ENCODE measurements at regions of chr2 and their contacts with region 1.

Region 1: GRCh38 chr2:239267288-239267951 is 133.4 kb downstream of the HDAC4 start:
- H3K4me3 Mint-ChIP-seq: peak overlapping the region; percentile 87
- H3K27ac Mint-ChIP-seq: peak overlapping the region; percentile 99
- H3K4me1 Mint-ChIP-seq: peaks cover 87% of the 10 kb centered on the region
- H3K27me3 Mint-ChIP-seq: no peaks in the 10 kb centered on the region

Region 2: GRCh38 chr2:238784671-238785527 is 482.5 kb before region 1 on chr2:
- intact Hi-C with region 1: no loop called
- H3K4me3 Mint-ChIP-seq: no peak overlapping the region
- H3K27ac Mint-ChIP-seq: no peak overlapping the region
- H3K4me1 Mint-ChIP-seq: no peaks in the 10 kb centered on the region
- H3K27me3 Mint-ChIP-seq: peaks cover 6% of the 10 kb centered on the region

Region 3: GRCh38 chr2:239151201-239152131 is 116.0 kb before region 1 on chr2:
- intact Hi-C with region 1: no loop called
- H3K4me3 Mint-ChIP-seq: no peak overlapping the region
- H3K27ac Mint-ChIP-seq: no peak overlapping the region
- H3K4me1 Mint-ChIP-seq: no peaks in the 10 kb centered on the region
- H3K27me3 Mint-ChIP-seq: no peaks in the 10 kb centered on the region

Region 4: GRCh38 chr2:239230318-239231052 is 36.9 kb before region 1 on chr2:
- intact Hi-C with region 1: loop called (anchors 5 kb)
- H3K4me3 Mint-ChIP-seq: peak overlapping the region; percentile 20
- H3K27ac Mint-ChIP-seq: peak overlapping the region; percentile 90
- H3K4me1 Mint-ChIP-seq: peaks cover 89% of the 10 kb centered on the region
- H3K27me3 Mint-ChIP-seq: no peaks in the 10 kb centered on the region

Region 5: DNA sequence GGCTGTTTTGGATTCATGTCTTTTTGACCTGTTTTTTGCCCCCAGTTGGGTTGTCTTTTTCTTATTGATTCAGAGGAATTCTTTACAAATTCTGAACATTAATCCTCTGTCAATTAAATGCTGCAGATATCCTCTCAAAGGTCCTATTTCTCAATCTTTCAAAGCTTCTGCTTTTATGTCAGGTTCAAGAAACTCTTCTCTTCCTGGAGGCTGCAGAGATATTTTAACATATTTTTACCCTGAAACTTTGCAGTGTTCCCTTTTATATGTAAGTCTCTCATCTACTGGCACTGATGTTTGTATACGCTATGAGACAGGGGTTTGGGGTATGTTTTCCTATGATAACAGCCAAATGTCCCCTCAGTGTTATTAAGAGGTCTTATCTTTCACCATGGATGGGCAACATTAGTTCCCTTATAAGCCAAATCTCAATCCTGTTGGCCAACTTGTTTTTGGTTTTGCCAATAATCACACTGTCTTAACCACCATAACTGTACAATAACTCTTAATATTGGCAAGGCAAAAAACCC is 25.9 kb before region 1 on chr2:
- intact Hi-C with region 1: no loop called
- H3K4me3 Mint-ChIP-seq: no peak overlapping the region
- H3K27ac Mint-ChIP-seq: peak overlapping the region; percentile 69
- H3K4me1 Mint-ChIP-seq: peaks cover 95% of the 10 kb centered on the region
- H3K27me3 Mint-ChIP-seq: no peaks in the 10 kb centered on the region

Region 6: DNA sequence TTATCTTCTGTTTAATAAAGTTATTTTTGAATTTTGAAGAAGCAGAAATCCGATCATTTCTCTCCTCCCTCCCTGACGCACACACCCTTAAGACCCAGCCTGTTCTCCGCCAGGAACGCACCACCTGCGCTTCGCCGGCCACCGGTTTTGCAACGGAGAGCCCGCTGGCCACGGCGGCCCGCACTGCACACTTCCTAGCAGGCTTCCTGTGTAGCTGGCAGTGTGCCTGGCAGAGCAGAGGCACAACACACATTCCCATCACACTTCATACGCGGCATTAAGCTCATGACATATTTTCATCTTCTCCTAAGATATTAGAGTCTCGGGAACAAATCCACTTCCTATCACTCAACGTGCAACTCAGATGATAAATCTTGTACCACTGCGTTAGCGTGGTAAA is 14.6 kb before region 1 on chr2:
- intact Hi-C with region 1: loop called (anchors 2 kb)
- H3K4me3 Mint-ChIP-seq: peak overlapping the region; percentile 71
- H3K27ac Mint-ChIP-seq: peak overlapping the region; percentile 88
- H3K4me1 Mint-ChIP-seq: peaks cover 92% of the 10 kb centered on the region
- H3K27me3 Mint-ChIP-seq: no peaks in the 10 kb centered on the region

Region 7: DNA sequence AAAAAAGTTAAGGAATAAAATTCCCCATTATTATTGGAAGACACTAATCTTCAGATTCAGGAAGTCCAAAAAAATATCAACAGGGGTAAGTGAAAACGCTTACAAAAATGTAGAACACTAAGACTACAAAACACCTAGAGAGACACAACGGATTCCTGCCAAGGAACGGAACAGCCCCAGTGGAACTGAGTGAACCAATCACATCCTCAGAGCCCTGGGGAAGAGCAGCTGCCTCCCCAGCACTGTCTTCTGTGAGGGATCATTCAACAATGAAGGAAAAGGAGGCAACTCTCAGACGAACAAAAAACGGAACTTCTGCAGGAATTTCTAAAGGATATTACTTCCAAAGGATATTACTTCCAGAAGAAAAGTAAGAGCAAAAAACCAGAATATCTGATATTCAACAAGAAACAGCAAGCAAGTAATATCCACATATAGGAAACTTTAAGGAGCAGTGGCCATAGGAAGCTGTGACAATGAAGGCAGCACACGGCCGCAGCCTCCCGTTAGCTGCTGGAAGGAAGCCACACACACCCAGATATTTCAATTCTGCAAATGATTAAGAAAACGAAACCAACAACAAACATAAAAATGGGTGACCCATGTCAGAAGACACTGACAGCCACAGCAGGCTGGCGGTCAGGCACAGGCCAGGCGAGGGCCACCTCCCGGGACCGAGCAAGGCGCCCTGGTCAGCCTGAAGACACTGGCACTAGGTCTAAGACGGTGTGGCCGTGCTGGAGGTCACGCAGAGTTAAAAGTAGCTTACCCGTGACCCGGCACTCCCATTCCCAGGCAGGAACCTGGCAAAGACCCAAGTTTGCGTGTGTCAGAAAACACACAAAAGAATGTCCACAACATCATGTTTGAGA is 51.6 kb after region 1 on chr2:
- intact Hi-C with region 1: loop called (anchors 5 kb)
- H3K4me3 Mint-ChIP-seq: peak overlapping the region; percentile 72
- H3K27ac Mint-ChIP-seq: peak overlapping the region; percentile 98
- H3K4me1 Mint-ChIP-seq: peaks cover 55% of the 10 kb centered on the region
- H3K27me3 Mint-ChIP-seq: no peaks in the 10 kb centered on the region

Region 8: GRCh38 chr2:239401067-239401880 is 133.9 kb after region 1 on chr2:
- intact Hi-C with region 1: loop called (anchors 2 kb)
- H3K4me3 Mint-ChIP-seq: peak overlapping the region; percentile 86
- H3K27ac Mint-ChIP-seq: peak overlapping the region; percentile 100
- H3K4me1 Mint-ChIP-seq: peaks cover 40% of the 10 kb centered on the region
- H3K27me3 Mint-ChIP-seq: peaks cover 3% of the 10 kb centered on the region

Measured in dendritic cell treated with granulocyte-macrophage colony-stimulating factor and Interleukin-4, amounts not matched to agents 40 ng/mL and 50 ng/mL, for 4 days (primary cell).